AG04449 (cell line): ENCODE measurements at regions of chr4 and their contacts with region 1.

Region 1: DNA sequence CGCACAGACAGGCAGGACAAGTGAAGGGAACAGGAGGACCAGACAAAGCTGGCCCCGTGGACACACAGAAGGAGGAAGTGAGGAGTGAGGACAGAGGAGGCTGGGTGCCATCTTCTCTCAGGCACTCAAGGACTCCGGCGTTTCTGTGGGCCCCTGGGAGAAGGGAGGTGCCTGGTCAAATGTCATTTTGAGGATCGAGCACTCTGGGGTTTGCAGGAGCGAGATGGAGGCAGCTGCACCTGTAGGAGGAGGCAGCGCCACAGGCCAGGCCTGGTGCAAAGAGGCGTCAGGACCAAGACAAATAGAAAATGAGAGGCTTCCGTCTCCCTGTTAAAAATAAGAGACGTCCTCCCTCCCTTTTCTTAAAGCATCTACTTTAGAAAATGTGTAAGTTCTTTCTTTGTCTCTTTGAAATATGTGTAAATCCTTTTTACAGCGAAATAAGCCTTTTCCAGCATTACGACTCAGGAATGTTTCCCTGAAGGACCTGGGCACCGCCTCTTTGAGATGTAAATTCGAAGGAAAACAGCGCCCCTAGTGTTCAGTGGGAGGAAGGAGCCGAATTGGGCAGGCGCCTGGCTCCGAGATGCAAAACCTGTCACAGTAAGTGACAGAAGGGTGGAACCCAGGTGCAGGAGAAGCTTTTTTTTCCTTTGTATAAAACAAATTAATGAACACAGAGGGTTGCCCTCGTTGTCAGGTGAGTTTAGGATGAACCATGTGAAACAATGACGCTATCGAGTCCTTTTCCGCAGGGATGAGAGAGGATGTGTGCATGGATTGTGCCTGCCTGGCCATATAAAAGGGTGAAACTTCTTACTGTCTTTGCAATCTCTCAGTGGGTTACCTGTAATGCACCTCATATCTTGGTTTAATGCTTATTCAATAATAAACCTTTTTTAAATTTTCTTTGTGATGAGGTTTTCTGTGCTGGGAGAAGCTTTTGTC is 1.4 kb upstream of the C4orf50 start:
- DNase-seq: no peak
- H3K4me3 ChIP-seq: no peak overlapping the region
- CTCF ChIP-seq: peak; percentile 72

Region 2: DNA sequence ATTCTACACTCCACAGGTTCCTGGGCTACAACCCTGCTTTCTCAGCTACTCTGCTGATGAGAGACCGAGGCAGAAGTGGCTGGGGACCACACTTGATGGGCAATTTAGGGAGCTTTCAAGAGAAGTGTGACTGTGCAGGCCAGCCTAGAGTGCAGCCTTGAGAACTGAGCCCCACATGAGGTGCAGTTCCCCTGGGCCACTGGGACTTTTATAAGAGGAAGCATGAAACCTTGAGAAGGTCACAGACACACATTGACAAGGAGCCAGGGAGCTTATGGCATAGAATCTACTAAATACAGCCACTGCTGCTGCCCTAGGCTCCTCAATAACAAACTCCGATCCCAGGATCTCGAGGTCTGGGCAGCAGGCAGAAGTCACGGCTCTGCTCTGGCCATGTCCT is 14.4 kb before region 1 on chr4:
- CTCF ChIA-PET with region 1: interaction called, 10 read pairs
- POLR2A ChIA-PET with region 1: no interaction called
- DNase-seq: no peak
- H3K4me3 ChIP-seq: no peak overlapping the region
- CTCF ChIP-seq: no peak